ENCODE measurements at regions of chr2 and their contacts with region 1.

Region 1: GRCh38 chr2:6922201-6922685 is 5.0 kb downstream of the RNF144A start:
- DNase-seq: no peak
- ATAC-seq: no peak
- H3K4me3 ChIP-seq: no peak overlapping the region
- H3K27ac ChIP-seq: peak overlapping the region in 3 of 12 donors; percentile 37 to 60 (median 57)
- H3K4me1 ChIP-seq: peaks cover 16 to 92% (median 51%) of the 10 kb centered on the region in 12 donors
- H3K27me3 ChIP-seq: no peaks in the 10 kb centered on the region
- CTCF ChIP-seq: peak in 2 of 12 donors; percentile 9 to 11
- POLR2A ChIP-seq: no peak

Region 2: GRCh38 chr2:6909431-6910385 is 12.5 kb before region 1 on chr2:
- intact Hi-C with region 1: no loop called
- DNase-seq: no peak
- ATAC-seq: no peak
- H3K4me3 ChIP-seq: no peak overlapping the region
- H3K27ac ChIP-seq: no peak overlapping the region
- H3K4me1 ChIP-seq: peaks cover 0 to 15% (median 0%) of the 10 kb centered on the region in 12 donors
- H3K27me3 ChIP-seq: no peaks in the 10 kb centered on the region
- CTCF ChIP-seq: no peak
- POLR2A ChIP-seq: no peak

Region 3: GRCh38 chr2:6968319-6969100 is 46.3 kb after region 1 on chr2:
- intact Hi-C with region 1: loop called in 3 of 10 experiments (anchors 2 to 10 kb)
- DNase-seq: peak in 3 of 5 donors; percentile 49 to 54 (median 51)
- ATAC-seq: peak; percentile 83 to 94 (median 91)
- H3K4me3 ChIP-seq: no peak overlapping the region
- H3K27ac ChIP-seq: peak overlapping the region in 2 of 12 donors; percentile 5 to 39
- H3K4me1 ChIP-seq: peaks cover 0 to 35% (median 13%) of the 10 kb centered on the region in 12 donors
- H3K27me3 ChIP-seq: no peaks in the 10 kb centered on the region
- CTCF ChIP-seq: peak in 8 of 12 donors; percentile 23 to 46 (median 35)
- POLR2A ChIP-seq: no peak